HepG2 (cell line): ENCODE measurements at regions of chr14 and their contacts with region 1.

Region 1: GRCh38 chr14:50003213-50004031 is 110.5 kb downstream of the ARF6 start:
- DNase-seq: peak; percentile 71
- ATAC-seq: peak; percentile 70
- H3K4me3 ChIP-seq: peak overlapping the region; percentile 67 to 80 (median 78)
- H3K27ac ChIP-seq: peak overlapping the region; percentile 87
- H3K4me1 ChIP-seq: peaks cover 61% of the 10 kb centered on the region
- H3K27me3 ChIP-seq: no peaks in the 10 kb centered on the region
- CTCF ChIP-seq: peak; percentile 46; the same call in 1 of the 2 replicates
- EP300 ChIP-seq: peak in 1 of 2 experiments; percentile 41; a peak in 2 of 4 replicates
- POLR2A ChIP-seq: peak; percentile 60 to 84
- RAD21 ChIP-seq: no peak

Region 2: DNA sequence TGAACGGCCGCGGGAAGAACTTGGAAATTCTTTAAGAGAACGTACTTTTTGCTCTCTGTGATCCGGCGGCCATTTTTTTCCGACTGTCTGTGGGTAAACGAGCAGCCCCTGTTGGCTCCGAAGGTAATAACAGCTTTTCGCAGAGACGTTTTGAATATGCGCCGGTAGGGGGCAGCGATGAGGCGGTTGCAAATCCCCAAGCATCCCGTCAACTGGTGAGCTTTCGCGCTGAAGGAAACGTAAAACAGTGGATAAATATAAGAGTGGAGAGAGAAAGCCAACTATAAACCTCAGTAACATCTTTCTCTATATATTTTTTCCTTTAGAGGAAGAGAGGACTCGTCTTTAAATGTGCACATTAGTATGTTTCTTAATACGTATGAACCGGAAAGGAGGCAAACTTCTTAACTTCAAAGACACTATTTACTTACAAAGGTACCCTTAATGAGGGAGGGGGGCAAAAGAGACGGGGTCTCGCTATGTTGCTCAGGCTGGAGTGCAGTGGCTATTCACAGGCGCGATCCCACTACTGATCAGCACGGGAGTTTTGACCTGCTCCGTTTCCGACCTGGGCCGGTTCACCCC is 141.2 kb before region 1 on chr14:
- CTCF ChIA-PET with region 1: no interaction called
- POLR2A ChIA-PET with region 1: interaction called, 20 read pairs
- in situ Hi-C with region 1: no loop called
- intact Hi-C with region 1: loop called (anchors 2 kb)
- DNase-seq: peak; percentile 69
- ATAC-seq: peak; percentile 69
- H3K4me3 ChIP-seq: peak overlapping the region; percentile 72 to 89 (median 80)
- H3K27ac ChIP-seq: peak overlapping the region; percentile 92
- H3K4me1 ChIP-seq: peaks cover 30% of the 10 kb centered on the region
- H3K27me3 ChIP-seq: no peaks in the 10 kb centered on the region; a peak in 1 of 5 replicates
- CTCF ChIP-seq: peak; percentile 89
- EP300 ChIP-seq: no peak
- POLR2A ChIP-seq: no peak
- RAD21 ChIP-seq: no peak

Region 3: GRCh38 chr14:49879683-49880204 is 123.7 kb before region 1 on chr14:
- CTCF ChIA-PET with region 1: interaction called, 3 read pairs
- POLR2A ChIA-PET with region 1: interaction called, 10 read pairs
- in situ Hi-C with region 1: no loop called
- intact Hi-C with region 1: no loop called
- DNase-seq: peak; percentile 80
- ATAC-seq: peak; percentile 95
- H3K4me3 ChIP-seq: peak overlapping the region in 1 of 3 experiments; percentile 44; a peak in 2 of 6 replicates
- H3K27ac ChIP-seq: no peak overlapping the region
- H3K4me1 ChIP-seq: peaks cover 32% of the 10 kb centered on the region
- H3K27me3 ChIP-seq: no peaks in the 10 kb centered on the region; a peak in 1 of 5 replicates
- CTCF ChIP-seq: peak; percentile 87
- EP300 ChIP-seq: no peak
- POLR2A ChIP-seq: no peak
- RAD21 ChIP-seq: peak; percentile 72

Region 4: DNA sequence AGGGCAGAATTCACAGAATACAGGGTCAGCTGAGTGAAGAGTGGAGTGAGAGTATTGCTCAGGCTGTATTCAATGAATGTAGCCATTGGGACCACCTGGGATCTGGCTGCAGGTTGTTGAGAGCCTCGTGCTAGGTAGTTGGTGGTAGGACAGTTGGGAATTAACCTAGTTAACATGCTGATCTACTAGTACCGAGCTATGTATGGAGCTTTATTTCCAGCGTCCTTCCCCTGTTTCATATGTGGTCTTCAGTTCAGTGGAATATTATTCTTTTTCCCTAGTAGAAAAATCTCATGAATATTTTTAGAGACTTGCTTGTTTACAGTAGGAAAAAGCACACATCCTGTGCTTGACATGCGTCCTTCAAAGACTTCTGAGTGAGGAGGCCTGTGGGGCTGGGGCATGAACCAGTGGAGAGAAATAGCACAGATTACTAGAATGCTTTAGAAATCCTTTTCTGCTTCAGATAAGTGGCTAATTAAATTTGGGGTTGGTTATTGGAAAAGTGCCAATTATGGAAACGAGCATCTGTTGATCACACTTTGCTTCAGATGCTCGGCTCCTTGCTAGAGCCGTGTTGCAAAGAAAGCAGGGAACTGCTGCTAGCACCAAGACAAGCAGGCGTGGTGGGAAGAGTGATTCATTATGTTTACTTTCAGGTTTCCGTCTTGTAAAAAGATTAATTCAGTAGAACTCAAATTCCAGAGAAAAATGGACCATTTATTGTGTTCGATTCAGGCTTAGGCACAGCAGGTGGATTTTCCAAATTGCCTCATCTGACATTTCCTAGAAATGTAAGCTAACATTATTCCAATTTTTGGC is 56.9 kb before region 1 on chr14:
- CTCF ChIA-PET with region 1: no interaction called
- POLR2A ChIA-PET with region 1: interaction called, 9 read pairs
- in situ Hi-C with region 1: no loop called
- intact Hi-C with region 1: loop called (anchors 10 kb)
- DNase-seq: peak; percentile 32
- ATAC-seq: peak; percentile 73
- H3K4me3 ChIP-seq: peak overlapping the region in 1 of 3 experiments; percentile 18; a peak in 2 of 6 replicates
- H3K27ac ChIP-seq: no peak overlapping the region
- H3K4me1 ChIP-seq: peaks cover 53% of the 10 kb centered on the region
- H3K27me3 ChIP-seq: no peaks in the 10 kb centered on the region
- CTCF ChIP-seq: no peak
- EP300 ChIP-seq: no peak
- POLR2A ChIP-seq: no peak
- RAD21 ChIP-seq: no peak

Region 5: DNA sequence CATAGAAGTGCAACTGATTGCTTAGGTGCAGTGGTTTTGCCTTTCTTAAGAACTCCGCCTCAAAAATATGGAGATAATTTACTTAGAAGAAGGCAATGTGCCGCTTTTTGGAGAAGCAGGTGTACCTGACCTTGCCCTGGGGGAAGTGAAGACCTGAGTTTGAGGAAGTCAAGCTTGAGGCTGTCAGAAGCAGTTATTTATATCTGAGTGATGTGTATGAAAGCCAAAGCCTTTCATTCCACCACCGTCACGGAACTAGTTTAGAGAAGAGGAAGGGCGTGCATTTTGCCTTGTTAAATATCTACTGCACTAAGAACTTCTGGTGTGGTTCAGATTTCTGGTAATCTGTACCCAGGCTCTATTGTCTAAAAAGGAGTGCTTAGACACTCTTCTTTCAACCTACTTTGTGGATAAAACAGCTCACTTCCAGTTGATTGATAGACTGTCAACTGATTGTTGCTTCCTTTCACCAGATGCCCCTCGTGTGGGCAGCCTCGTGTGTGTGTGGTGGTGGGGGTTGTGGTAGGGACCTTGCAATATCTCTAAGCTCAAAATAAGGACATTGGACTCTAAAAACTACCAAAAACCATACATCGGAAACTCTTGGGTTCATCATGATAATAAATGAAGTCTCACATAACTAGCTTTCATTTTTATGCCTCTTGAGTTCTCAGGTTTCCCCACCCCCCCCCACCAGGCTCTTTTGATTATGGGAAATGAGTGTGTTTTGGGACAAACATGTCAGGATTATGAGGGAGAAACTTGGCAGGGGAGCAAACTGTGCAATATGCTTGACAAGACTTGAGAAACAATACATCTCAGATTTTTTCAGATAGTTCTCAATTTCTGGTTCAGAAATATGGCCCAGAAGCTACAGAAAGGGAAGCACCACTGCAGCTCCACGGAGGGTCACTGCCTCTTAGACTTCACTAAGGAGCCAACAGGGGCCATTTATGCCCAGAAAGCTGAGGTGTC is 32.0 kb before region 1 on chr14:
- CTCF ChIA-PET with region 1: no interaction called
- POLR2A ChIA-PET with region 1: interaction called, 66 read pairs
- in situ Hi-C with region 1: no loop called
- intact Hi-C with region 1: loop called (anchors 5 kb)
- DNase-seq: no peak
- ATAC-seq: no peak
- H3K4me3 ChIP-seq: no peak overlapping the region
- H3K27ac ChIP-seq: no peak overlapping the region
- H3K4me1 ChIP-seq: peaks cover 79% of the 10 kb centered on the region
- H3K27me3 ChIP-seq: no peaks in the 10 kb centered on the region
- CTCF ChIP-seq: no peak
- EP300 ChIP-seq: no peak
- POLR2A ChIP-seq: no peak
- RAD21 ChIP-seq: no peak

Region 6: GRCh38 chr14:49992901-49993335 is 10.5 kb before region 1 on chr14:
- CTCF ChIA-PET with region 1: no interaction called
- POLR2A ChIA-PET with region 1: interaction called, 67 read pairs
- in situ Hi-C with region 1: no loop called
- intact Hi-C with region 1: no loop called
- DNase-seq: peak; percentile 86
- ATAC-seq: peak; percentile 87
- H3K4me3 ChIP-seq: no peak overlapping the region
- H3K27ac ChIP-seq: no peak overlapping the region
- H3K4me1 ChIP-seq: peaks cover 78% of the 10 kb centered on the region
- H3K27me3 ChIP-seq: no peaks in the 10 kb centered on the region
- CTCF ChIP-seq: peak; percentile 15; the same call in 1 of the 2 replicates
- EP300 ChIP-seq: peak in 1 of 2 experiments; percentile 40; a peak in 1 of 4 replicates
- POLR2A ChIP-seq: no peak
- RAD21 ChIP-seq: 0 out of 2 replicates have a peak, but pooled peaks have one; percentile 26

Region 7: DNA sequence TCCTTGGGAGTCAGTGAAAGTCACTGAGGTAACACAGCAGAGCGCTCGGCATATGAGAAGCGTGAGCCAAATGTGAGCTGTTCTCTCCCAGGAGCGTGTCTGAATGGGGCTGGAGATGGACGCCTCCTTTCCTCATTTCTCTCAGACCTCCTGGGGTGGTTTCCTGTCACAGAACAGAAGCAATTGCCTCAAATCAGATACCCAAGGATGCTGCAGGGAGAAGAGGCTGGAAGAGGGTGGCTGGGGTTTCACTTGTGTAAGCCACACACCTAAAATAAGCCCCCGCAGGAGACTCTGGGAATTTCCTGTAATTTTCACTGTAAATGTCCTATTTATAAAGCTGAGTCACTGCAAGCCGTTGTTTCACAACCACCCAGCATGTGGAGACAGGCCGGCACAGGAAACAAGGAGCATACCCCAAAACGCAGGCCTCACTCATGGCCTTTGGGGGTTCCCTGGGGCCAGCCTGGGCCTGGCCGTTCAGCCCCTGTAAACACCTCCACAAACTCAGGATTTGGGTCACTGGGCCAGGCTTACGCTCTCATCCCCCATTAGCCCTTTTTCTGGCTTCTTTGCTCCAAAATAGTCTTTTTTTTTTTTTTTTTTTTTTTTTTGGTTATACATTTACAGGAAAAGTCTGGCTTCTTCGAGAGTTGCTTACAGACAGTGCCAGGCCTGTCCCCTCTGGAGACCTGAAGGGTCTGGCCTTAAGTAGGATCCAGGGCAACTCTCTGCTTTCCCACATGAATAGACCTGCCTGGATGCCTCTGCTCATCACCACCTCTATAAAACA is 57.6 kb after region 1 on chr14:
- CTCF ChIA-PET with region 1: no interaction called
- POLR2A ChIA-PET with region 1: interaction called, 85 read pairs
- in situ Hi-C with region 1: no loop called
- intact Hi-C with region 1: loop called (anchors 5 kb)
- DNase-seq: peak; percentile 89
- ATAC-seq: peak; percentile 71
- H3K4me3 ChIP-seq: peak overlapping the region; percentile 63 to 76 (median 64)
- H3K27ac ChIP-seq: peak overlapping the region; percentile 88
- H3K4me1 ChIP-seq: peaks cover 54% of the 10 kb centered on the region
- H3K27me3 ChIP-seq: no peaks in the 10 kb centered on the region
- CTCF ChIP-seq: 0 out of 2 replicates have a peak, but pooled peaks have one; percentile 3
- EP300 ChIP-seq: peak in 1 of 2 experiments; percentile 66; a peak in 2 of 4 replicates
- POLR2A ChIP-seq: peak in 1 of 2 experiments; percentile 45; a peak in 1 of 4 replicates
- RAD21 ChIP-seq: no peak; the same call in 1 of the 2 replicates